ENCODE measurements at regions of chr9 and their contacts with region 1.

Region 1: GRCh38 chr9:89602978-89603766 is 1.6 kb upstream of the GADD45G start:
- DNase-seq: peak; percentile 85
- CTCF ChIP-seq: peak; percentile 91

Region 2: DNA sequence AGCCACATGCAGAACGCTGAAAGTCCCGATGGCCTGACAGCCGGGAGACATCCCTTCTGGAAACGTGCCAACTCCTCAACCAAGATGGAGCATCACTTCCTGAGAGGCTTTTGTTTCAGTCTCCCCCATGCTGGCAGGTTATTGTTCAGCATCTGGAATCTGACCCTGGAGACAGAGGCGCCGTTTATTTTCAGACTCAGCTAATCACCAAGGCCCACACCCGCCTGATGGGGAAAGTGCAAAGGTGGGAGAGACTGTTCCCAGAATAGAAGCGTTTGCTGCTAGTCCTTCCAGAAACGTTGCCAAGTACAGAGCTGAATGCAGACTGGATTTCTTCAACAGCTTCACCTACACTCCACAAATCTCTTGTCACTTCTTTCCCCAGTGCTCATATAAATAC is 653.7 kb before region 1 on chr9:
- in situ Hi-C with region 1: no loop called
- DNase-seq: no peak
- CTCF ChIP-seq: no peak

Region 3: DNA sequence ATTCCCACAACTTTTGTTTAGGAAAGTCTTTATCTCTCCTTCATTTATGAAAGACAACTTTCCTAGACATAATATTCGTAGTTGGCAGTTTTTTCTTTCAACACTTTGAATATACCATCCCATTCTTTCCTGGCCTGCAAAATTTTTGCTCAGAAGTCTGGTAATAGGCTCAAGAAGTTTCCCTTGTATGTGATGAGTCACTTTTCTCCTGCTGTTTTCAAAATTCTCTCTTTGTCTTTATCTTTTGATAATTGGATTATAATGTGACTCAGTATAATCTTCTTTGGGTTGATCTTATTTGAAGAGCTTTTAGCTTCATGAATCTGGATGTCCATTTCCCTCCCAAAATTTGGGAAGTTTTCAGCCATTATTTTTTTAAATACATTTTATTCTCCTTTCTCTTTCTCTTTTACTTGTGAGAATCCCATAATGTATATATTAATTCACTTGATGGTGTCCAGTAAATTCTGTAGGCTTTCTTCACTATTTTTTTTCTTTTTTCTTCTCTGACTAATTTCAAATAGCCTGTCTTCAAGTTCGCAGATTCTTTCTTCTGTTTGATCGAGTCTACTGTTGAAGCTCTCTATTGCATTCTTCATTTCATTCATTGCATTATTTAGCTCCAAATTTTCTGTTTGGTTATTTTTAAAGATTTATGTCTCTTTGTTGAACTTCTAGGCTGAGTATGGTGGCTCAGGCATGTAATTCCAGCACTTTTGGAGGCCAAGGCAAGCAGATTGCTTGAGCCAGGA is 329.5 kb before region 1 on chr9:
- in situ Hi-C with region 1: no loop called
- DNase-seq: no peak
- CTCF ChIP-seq: no peak

Region 4: GRCh38 chr9:90102292-90102901 is 499.2 kb after region 1 on chr9:
- in situ Hi-C with region 1: loop called (anchors 10 kb)
- DNase-seq: peak; percentile 88
- CTCF ChIP-seq: peak; percentile 79

Region 5: DNA sequence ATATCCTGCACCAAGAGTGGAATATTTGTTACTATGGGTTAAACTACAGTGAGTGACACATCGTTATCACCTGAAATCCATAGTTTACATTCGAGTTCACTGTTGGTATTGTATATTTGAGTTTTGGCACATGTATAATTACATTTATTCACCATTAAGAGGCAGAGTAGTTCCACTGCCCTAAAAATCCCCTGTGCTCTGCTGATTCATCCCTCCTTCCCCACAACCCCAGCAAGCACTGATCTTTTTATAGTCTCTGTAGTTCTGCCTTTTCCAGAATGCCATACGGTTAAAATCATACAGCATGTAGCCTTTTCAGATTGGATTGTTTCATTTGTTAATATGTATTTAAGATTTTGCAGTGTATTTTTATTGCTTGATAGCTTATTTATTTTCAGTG is 544.3 kb after region 1 on chr9:
- in situ Hi-C with region 1: no loop called
- DNase-seq: no peak
- CTCF ChIP-seq: no peak